PC-3 (cell line): ENCODE measurements at regions of chr19 and their contacts with region 1.

Region 1: DNA sequence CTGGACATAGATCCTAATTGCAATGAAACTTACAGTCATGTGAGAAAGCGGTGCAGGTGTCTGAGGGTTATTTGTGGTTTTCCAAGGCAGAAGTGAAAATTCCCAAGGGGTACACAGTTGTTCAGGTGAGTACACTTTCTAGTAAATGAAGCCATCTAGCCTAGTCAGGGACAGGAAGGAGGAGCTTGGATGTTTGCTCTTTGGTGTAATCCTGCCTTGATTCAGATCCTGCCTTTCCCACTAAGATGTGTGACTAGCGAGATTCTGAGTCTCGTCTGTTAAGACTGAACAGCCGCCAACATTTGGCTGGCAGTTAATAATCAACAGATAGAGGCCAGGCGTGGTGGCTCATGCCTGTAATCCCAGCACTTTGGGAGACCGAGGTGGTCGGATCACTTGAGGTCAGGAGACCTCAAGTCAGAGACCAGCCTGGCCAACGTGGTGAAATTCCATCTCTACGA is 2.5 kb downstream of the RPS9 start:
- DNase-seq: peak; percentile 46
- ATAC-seq: peak; percentile 29
- H3K4me3 ChIP-seq: peak overlapping the region; percentile 96
- H3K27ac ChIP-seq: no peak overlapping the region
- H3K4me1 ChIP-seq: peaks cover 48% of the 10 kb centered on the region
- H3K27me3 ChIP-seq: no peaks in the 10 kb centered on the region
- CTCF ChIP-seq: no peak

Region 2: GRCh38 chr19:53824134-53824611 is 379.0 kb before region 1 on chr19 and contains the start of gene NLRP12:
- CTCF ChIA-PET with region 1: no interaction called
- POLR2A ChIA-PET with region 1: interaction called, 24 read pairs
- intact Hi-C with region 1: no loop called
- DNase-seq: no peak
- ATAC-seq: no peak
- H3K4me3 ChIP-seq: no peak within 1 kb of the TSS
- H3K27ac ChIP-seq: no peak within 1 kb of the TSS
- H3K4me1 ChIP-seq: no peaks in the 10 kb centered on the region
- H3K27me3 ChIP-seq: no peaks in the 10 kb centered on the region
- CTCF ChIP-seq: no peak
- total RNA-seq, gene NLRP12: 0.12 TPM in 1 of 2 replicates, not detected in the other

Region 3: GRCh38 chr19:54128796-54129616 is 74.2 kb before region 1 on chr19:
- CTCF ChIA-PET with region 1: no interaction called
- POLR2A ChIA-PET with region 1: no interaction called
- intact Hi-C with region 1: no loop called
- DNase-seq: no peak
- ATAC-seq: no peak
- H3K4me3 ChIP-seq: no peak overlapping the region
- H3K27ac ChIP-seq: no peak overlapping the region
- H3K4me1 ChIP-seq: no peaks in the 10 kb centered on the region
- H3K27me3 ChIP-seq: no peaks in the 10 kb centered on the region
- CTCF ChIP-seq: no peak

Region 4: GRCh38 chr19:54159352-54160181 is 43.6 kb before region 1 on chr19 and contains the start of gene LENG1:
- CTCF ChIA-PET with region 1: no interaction called
- POLR2A ChIA-PET with region 1: no interaction called
- intact Hi-C with region 1: loop called (anchors 5 kb)
- DNase-seq: peak; percentile 100
- ATAC-seq: peak; percentile 81
- H3K4me3 ChIP-seq: peak within 1 kb of the TSS; percentile 71
- H3K27ac ChIP-seq: peak within 1 kb of the TSS; percentile 72
- H3K4me1 ChIP-seq: peaks cover 38% of the 10 kb centered on the region
- H3K27me3 ChIP-seq: no peaks in the 10 kb centered on the region
- CTCF ChIP-seq: peak; percentile 34; the same call in 1 of the 2 replicates
- total RNA-seq, gene LENG1: 13.6 and 18.8 TPM in 2 replicates